Gastrocnemius medialis (tissue), 4 donors: ENCODE measurements at regions of chrX and their contacts with region 1.

Region 1: GRCh38 chrX:139126493-139126892 is 404.0 kb upstream of the F9 start:
- DNase-seq: peak; percentile 11 to 62
- ATAC-seq: peak; percentile 94 to 98
- H3K4me3 ChIP-seq: no peak overlapping the region
- H3K27ac ChIP-seq: peak overlapping the region in 2 of 4 donors; percentile 42 to 43
- H3K4me1 ChIP-seq: no peaks in the 10 kb centered on the region
- H3K27me3 ChIP-seq: no peaks in the 10 kb centered on the region
- CTCF ChIP-seq: peak; percentile 53 to 79 (median 60)
- POLR2A ChIP-seq: no peak

Region 2: DNA sequence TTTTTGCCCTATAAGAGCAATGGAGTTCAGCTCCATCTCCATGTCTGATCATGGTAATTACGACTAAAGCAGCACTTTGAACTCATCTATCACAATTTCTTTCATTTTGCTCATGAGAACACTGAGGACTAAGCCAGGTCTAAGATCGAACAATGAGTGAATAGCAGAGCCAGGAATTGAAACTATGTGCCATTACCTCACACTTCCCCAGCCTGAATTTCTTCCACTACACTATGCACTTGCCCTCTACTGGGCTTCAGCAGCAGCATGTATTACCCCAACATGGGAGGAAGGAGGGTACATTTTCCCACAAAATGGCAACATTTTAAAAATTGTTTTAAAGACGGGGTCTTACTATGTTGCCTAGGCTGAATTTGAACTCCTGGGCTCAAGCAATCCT is 140.3 kb before region 1 on chrX:
- in situ Hi-C with region 1: no loop called
- intact Hi-C with region 1: no loop called
- DNase-seq: no peak
- ATAC-seq: no peak
- H3K4me3 ChIP-seq: no peak overlapping the region
- H3K27ac ChIP-seq: no peak overlapping the region
- H3K4me1 ChIP-seq: peaks cover 0 to 3% of the 10 kb centered on the region in 2 donors
- H3K27me3 ChIP-seq: no peaks in the 10 kb centered on the region
- CTCF ChIP-seq: no peak
- POLR2A ChIP-seq: no peak

Region 3: GRCh38 chrX:139429913-139430312 is 303.4 kb after region 1 on chrX:
- in situ Hi-C with region 1: no loop called
- intact Hi-C with region 1: loop called (anchors 1 kb)
- DNase-seq: no peak
- ATAC-seq: no peak
- H3K4me3 ChIP-seq: no peak overlapping the region
- H3K27ac ChIP-seq: no peak overlapping the region
- H3K4me1 ChIP-seq: no peaks in the 10 kb centered on the region
- H3K27me3 ChIP-seq: no peaks in the 10 kb centered on the region
- CTCF ChIP-seq: peak in 2 of 5 experiments; percentile 22 to 33
- POLR2A ChIP-seq: no peak